IMR-90 (cell line): ENCODE measurements at regions of chr5 and their contacts with region 1.

Region 1: DNA sequence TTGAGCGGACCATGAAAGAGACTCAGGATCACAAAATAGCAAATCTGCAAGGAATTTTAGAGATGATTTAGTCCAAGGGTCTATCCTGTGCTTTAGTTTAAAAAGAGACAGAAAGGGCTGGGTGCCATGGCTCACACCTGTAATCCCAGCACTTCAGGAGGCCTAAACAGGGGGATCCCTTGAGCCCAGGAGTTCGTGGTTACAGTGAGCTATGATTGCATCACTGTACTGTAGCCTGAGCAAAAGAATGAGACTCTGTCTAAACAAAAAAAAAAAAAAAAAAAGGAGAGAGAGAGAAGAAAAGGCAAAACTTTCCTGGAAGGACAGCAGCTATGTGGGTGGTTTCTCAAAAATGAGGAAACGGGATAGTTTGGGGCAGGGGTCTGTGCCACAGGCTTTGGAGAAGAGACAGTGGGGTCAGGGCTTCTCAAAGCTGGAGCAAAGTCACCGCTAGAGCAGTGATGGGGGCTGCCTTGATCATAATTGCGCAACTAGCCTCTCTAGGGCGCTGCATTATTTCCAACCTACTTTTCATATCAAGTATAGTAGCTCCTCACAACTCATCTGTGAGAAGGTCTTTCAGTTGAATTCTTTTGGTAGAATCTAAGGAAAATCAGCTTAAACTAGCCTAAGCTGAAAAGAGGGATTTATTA is 8.5 kb upstream of the ANKH start:
- DNase-seq: peak; percentile 70
- ATAC-seq: peak; percentile 75
- H3K4me3 ChIP-seq: no peak overlapping the region
- H3K27ac ChIP-seq: peak overlapping the region; percentile 4; the same call in 1 of the 2 replicates
- H3K4me1 ChIP-seq: peaks cover 4% of the 10 kb centered on the region; the same call in 1 of the 2 replicates
- H3K27me3 ChIP-seq: no peaks in the 10 kb centered on the region; the same call in none of the 2 replicates
- CTCF ChIP-seq: no peak
- POLR2A ChIP-seq: no peak
- RAD21 ChIP-seq: no peak

Region 2: DNA sequence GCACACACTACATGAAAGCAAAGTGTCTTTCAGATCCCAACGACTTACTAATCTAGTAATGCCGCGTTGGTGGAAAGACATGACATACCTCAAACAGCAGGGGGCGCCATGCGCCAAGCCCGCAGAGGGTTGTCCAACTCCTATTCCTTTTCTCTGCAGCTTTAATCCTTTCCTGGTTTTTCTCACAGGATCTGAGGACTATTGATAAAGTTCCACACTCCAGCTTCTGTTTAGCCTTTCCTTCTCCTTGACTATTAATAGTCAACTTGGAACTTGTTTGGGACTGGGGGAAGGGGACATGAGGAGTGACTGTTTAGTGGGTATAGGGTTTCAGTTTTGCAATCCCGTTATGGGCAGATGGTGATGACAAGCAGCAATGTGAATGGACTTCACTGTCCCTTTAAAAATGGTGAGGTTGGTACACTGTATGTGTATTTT is 152.6 kb before region 1 on chr5:
- CTCF ChIA-PET with region 1: no interaction called
- POLR2A ChIA-PET with region 1: no interaction called
- dilution Hi-C with region 1: no loop called
- in situ Hi-C with region 1: no loop called
- intact Hi-C with region 1: no loop called
- DNase-seq: peak; percentile 81
- ATAC-seq: peak; percentile 84
- H3K4me3 ChIP-seq: no peak overlapping the region
- H3K27ac ChIP-seq: no peak overlapping the region
- H3K4me1 ChIP-seq: peaks cover 10% of the 10 kb centered on the region
- H3K27me3 ChIP-seq: no peaks in the 10 kb centered on the region
- CTCF ChIP-seq: peak; percentile 98
- POLR2A ChIP-seq: peak; percentile 52; the same call in 1 of the 2 replicates
- RAD21 ChIP-seq: peak; percentile 99

Region 3: GRCh38 chr5:14900731-14901461 is 20.8 kb after region 1 on chr5:
- CTCF ChIA-PET with region 1: no interaction called
- POLR2A ChIA-PET with region 1: no interaction called
- dilution Hi-C with region 1: no loop called
- in situ Hi-C with region 1: no loop called
- intact Hi-C with region 1: loop called (anchors 2 kb)
- DNase-seq: peak; percentile 86
- ATAC-seq: peak; percentile 78
- H3K4me3 ChIP-seq: no peak overlapping the region
- H3K27ac ChIP-seq: peak overlapping the region; percentile 90
- H3K4me1 ChIP-seq: peaks cover 7% of the 10 kb centered on the region
- H3K27me3 ChIP-seq: peaks cover 2% of the 10 kb centered on the region
- CTCF ChIP-seq: no peak
- POLR2A ChIP-seq: no peak
- RAD21 ChIP-seq: no peak

Region 4: DNA sequence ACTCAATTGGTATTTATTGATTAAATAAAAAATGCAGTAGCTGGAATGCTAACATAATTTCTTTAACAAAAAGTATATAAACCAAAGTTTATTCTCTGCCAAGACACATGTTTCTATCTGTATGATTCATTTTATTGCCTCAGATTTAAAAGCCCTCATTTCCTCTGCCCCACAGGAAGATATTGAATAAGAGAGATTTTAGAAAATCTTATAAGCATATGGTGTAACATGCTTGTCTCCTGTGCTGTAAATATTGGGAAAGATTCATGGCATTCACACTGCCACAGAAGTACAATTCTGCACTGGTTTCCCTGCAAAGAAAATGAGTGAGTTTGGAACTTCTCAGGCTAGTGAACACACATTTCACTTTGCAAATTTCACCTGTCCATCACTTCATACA is 485.0 kb after region 1 on chr5:
- CTCF ChIA-PET with region 1: no interaction called
- POLR2A ChIA-PET with region 1: no interaction called
- dilution Hi-C with region 1: no loop called
- in situ Hi-C with region 1: no loop called
- intact Hi-C with region 1: no loop called
- DNase-seq: no peak
- ATAC-seq: no peak
- H3K4me3 ChIP-seq: no peak overlapping the region
- H3K27ac ChIP-seq: no peak overlapping the region
- H3K4me1 ChIP-seq: no peaks in the 10 kb centered on the region
- H3K27me3 ChIP-seq: no peaks in the 10 kb centered on the region; the same call in 1 of the 2 replicates
- CTCF ChIP-seq: no peak
- POLR2A ChIP-seq: no peak
- RAD21 ChIP-seq: no peak